ENCODE measurements at regions of chr15 and their contacts with region 1.

Region 1: DNA sequence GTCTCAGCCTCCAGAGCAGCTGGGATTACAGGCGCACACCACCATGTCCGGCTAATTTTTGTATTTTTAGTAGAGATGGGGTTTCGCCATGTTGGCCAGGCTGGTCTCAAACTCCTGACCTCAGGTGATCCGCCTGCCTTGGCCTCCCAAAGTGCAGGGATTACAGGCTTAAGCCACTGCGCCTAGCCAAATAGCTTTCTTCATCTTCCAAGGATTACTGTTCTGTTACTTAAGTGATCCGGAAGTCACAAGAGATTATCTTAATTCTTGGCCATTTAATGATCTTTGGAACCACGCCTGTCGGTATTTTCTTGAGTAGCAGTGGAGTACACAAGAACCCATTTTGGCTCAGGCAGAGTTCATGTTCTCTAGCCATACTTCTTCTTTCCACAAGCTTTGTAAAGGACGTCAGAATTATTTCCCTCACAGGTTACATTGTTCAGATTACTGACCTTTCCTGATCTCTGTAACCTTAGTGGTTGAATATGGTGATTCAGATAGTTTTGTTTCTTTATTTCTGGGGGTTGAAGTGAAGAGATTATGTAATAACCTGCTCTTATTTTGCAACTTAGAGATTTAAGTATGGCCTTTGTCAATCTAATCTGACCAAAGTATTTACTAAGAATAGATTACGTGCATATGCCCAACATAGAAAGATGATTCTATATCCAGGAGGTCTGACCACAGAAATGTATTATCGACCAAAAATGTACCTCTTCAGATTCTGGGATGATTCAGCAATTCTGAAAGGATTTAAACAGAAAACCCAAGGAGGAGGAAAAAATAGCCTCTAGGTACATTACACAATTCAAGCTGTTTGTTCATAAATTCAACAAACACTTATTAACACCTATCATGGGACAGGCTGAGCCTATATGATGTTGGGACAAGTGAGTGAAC is 132.2 kb downstream of the GREM1 start:
- DNase-seq: no peak
- H3K4me3 ChIP-seq: no peak overlapping the region
- H3K27ac ChIP-seq: no peak overlapping the region
- H3K4me1 ChIP-seq: no peaks in the 10 kb centered on the region
- CTCF ChIP-seq: no peak

Region 2: DNA sequence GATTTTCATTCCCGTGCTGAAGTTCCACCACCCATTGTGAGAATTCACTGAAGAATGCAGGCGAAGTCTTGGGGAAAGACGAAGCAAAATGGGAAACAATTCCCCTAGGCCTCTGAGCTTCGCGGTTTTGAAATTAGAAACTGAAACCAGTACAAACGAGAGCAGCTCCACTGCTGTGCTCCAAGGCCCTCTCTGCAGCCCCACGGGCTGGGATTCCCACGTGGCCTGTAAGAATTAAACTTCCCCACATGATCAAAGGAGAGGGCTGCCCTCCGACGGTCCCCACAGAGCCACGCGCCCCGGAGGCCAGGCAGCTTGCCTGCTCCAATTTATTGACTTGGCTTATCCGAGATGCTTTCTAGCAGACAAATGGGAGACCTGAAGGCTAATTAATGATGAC is 11.7 kb after region 1 on chr15:
- CTCF ChIA-PET with region 1: no interaction called
- POLR2A ChIA-PET with region 1: no interaction called
- intact Hi-C with region 1: no loop called
- DNase-seq: no peak
- H3K4me3 ChIP-seq: no peak overlapping the region
- H3K27ac ChIP-seq: no peak overlapping the region
- H3K4me1 ChIP-seq: peaks cover 4% of the 10 kb centered on the region
- CTCF ChIP-seq: no peak

Region 3: DNA sequence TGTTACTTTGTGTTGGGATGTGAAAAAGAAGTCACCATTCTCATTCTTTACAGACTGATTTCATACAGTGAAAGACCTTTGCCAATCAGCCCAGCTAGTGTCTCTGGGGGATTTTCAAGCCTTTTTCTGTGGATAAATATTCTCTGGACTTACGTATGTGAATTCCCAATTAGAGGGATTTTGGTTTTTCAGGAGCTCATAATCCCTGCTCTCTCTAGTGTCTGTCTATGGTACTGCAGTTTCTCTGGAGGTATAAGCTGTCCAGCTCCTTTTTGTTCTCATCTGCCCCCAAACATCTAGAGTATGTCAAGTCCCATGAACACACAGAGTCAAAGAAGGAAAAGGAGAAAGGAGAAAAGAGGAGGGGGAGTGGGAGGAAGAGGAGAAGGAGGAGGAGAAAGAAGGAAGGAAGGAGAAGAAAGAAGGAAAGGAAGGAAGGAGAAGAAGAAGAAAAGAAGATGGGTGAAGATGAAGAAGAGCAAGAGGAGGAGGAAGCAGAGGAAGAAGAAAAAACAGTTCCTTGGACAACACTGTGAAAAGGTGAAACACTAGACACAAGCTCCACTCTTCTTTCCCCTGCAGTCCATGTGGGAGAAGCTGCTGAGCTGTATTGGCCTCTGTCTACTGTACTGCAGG is 86.4 kb after region 1 on chr15:
- CTCF ChIA-PET with region 1: no interaction called
- POLR2A ChIA-PET with region 1: no interaction called
- intact Hi-C with region 1: loop called (anchors 5 kb)
- DNase-seq: peak; percentile 34
- H3K4me3 ChIP-seq: no peak overlapping the region
- H3K27ac ChIP-seq: no peak overlapping the region
- H3K4me1 ChIP-seq: no peaks in the 10 kb centered on the region
- CTCF ChIP-seq: peak; percentile 83